Mammary epithelial cell (primary cell): ENCODE measurements at regions of chr3 and their contacts with region 1.

Region 1: GRCh38 chr3:72957297-72957696 is 39.3 kb upstream of the PPP4R2 start:
- DNase-seq: no peak
- H3K4me3 ChIP-seq: no peak overlapping the region
- H3K27ac ChIP-seq: no peak overlapping the region
- H3K4me1 ChIP-seq: no peaks in the 10 kb centered on the region
- H3K27me3 ChIP-seq: no peaks in the 10 kb centered on the region
- CTCF ChIP-seq: no peak

Region 2: DNA sequence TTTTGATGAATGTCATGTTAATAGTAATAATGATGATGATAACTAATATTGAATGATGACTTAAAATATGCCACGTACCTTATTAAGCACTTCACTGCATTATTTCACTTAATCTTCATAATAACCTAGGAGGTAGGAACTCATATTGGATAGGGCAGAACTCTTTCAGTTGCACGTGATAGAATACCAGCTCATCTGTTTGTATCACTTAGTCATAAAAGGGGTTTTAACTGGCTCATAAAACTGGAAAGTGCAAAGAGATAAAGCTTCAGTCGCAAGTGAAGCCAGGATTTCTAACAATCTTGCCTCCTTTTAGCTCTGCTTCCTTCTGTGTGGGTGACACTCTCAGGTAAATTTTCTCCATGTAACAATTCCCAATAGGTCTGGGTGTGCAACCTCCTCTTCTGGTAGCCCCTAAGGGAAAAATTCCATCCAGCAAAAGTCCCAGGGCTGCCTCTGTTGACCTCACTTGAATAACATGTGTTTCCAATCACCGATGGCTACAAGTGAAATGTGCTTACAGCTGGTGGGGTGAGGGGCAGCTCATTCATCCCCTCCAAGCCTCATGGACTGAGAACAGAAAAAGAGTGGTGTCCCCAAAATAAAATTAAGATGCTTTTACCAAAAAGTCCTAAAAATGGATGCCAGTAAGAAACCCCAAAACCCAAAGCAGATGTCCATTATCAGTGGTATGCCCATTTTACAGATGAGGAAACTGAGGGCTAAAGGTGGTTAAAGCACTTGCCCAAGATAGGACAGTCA is 60.1 kb before region 1 on chr3:
- CTCF ChIA-PET with region 1: no interaction called
- dilution Hi-C with region 1: loop called (anchors 5 kb)
- in situ Hi-C with region 1: no loop called
- intact Hi-C with region 1: no loop called
- DNase-seq: peak; percentile 12
- H3K4me3 ChIP-seq: no peak overlapping the region
- H3K27ac ChIP-seq: no peak overlapping the region
- H3K4me1 ChIP-seq: peaks cover 10% of the 10 kb centered on the region
- H3K27me3 ChIP-seq: no peaks in the 10 kb centered on the region
- CTCF ChIP-seq: no peak